ENCODE measurements at regions of chr6 and their contacts with region 1.

Region 1: GRCh38 chr6:10531503-10531902 is 10.4 kb downstream of the GCNT2 start:
- DNase-seq: no peak
- CTCF ChIP-seq: no peak

Region 2: GRCh38 chr6:10521104-10521808 is 10.2 kb before region 1 on chr6 and contains the start of gene GCNT2:
- CTCF ChIA-PET with region 1: interaction called, 10 read pairs
- POLR2A ChIA-PET with region 1: no interaction called
- DNase-seq: peak; percentile 32
- CTCF ChIP-seq: no peak

Region 3: GRCh38 chr6:10613066-10613465 is 81.6 kb after region 1 on chr6:
- CTCF ChIA-PET with region 1: no interaction called
- POLR2A ChIA-PET with region 1: no interaction called
- DNase-seq: no peak
- CTCF ChIP-seq: no peak

Measured in GM10248 (cell line).